ENCODE measurements at regions of chr5 and their contacts with region 1.

Region 1: GRCh38 chr5:150389531-150390266 is 23.0 kb downstream of the CD74 start:
- DNase-seq: no peak
- H3K4me3 ChIP-seq: no peak overlapping the region
- H3K27ac ChIP-seq: no peak overlapping the region
- H3K4me1 ChIP-seq: no peaks in the 10 kb centered on the region
- H3K27me3 ChIP-seq: no peaks in the 10 kb centered on the region
- CTCF ChIP-seq: no peak
- EP300 ChIP-seq: no peak
- POLR2A ChIP-seq: no peak
- RAD21 ChIP-seq: no peak

Region 2: GRCh38 chr5:150372639-150373038 is 17.1 kb before region 1 on chr5:
- CTCF ChIA-PET with region 1: interaction called, 274 read pairs
- POLR2A ChIA-PET with region 1: interaction called, 455 read pairs
- DNase-seq: no peak
- H3K4me3 ChIP-seq: no peak overlapping the region
- H3K27ac ChIP-seq: no peak overlapping the region
- H3K4me1 ChIP-seq: no peaks in the 10 kb centered on the region
- H3K27me3 ChIP-seq: no peaks in the 10 kb centered on the region
- CTCF ChIP-seq: no peak
- EP300 ChIP-seq: no peak
- POLR2A ChIP-seq: no peak
- RAD21 ChIP-seq: no peak

Region 3: DNA sequence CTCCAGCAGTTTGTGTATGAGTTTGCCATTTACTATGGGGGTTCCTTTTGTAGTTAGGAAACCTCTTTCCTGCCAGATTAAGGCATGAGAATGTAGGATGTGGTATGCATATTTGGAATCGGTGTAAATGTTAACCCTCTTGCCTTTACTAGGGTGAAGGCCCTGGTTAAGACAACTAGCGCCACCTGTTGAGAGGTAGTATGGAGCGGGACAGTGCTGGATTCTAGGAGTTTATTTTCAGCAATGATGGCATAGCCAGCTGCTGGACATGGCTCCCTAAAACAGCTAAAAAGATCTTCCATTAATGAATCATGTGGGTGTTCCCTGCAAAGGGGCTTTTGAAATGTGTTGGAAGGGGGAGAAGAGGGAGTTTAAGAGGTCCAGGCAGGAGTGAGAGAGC is 600.0 kb after region 1 on chr5:
- CTCF ChIA-PET with region 1: no interaction called
- POLR2A ChIA-PET with region 1: no interaction called
- DNase-seq: peak; percentile 9 to 60
- H3K4me3 ChIP-seq: no peak overlapping the region
- H3K27ac ChIP-seq: no peak overlapping the region
- H3K4me1 ChIP-seq: no peaks in the 10 kb centered on the region
- H3K27me3 ChIP-seq: no peaks in the 10 kb centered on the region
- CTCF ChIP-seq: peak; percentile 40 to 79 (median 69)
- EP300 ChIP-seq: no peak
- POLR2A ChIP-seq: no peak
- RAD21 ChIP-seq: peak; percentile 75 to 78

Region 4: DNA sequence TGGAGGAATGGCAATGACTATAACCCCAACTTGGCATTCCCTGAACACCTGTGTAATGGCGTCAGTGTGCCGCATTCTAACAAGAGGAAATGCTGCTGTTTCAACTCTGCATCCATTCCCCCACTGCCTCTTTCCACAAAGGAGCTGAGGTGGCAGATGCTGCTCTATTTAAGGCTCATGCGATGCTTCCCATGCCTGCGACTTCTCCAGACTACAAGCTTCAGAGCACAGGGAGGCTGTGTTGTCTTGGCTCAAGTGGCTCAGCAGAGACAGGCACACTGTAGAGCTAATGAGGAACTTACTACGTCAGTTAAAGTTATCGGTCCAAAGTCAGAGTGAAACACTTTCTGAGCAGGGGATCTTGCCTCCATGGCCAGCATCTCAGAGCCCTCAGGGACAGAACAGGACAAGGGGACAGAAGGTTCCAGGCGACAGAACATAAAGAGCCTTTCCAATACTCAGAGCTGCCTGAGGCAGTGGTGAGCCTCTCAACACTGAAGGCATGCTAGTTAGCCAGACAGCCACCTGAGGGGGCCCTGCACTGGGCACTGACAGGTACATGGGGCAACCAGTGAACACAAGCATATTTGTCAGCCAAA is 669.3 kb after region 1 on chr5:
- CTCF ChIA-PET with region 1: no interaction called
- POLR2A ChIA-PET with region 1: no interaction called
- DNase-seq: no peak
- H3K4me3 ChIP-seq: no peak overlapping the region
- H3K27ac ChIP-seq: no peak overlapping the region
- H3K4me1 ChIP-seq: no peaks in the 10 kb centered on the region
- H3K27me3 ChIP-seq: no peaks in the 10 kb centered on the region
- CTCF ChIP-seq: no peak
- EP300 ChIP-seq: no peak
- POLR2A ChIP-seq: no peak
- RAD21 ChIP-seq: no peak; a peak in 1 of 4 replicates